GM12878 (cell line): ENCODE measurements at regions of chr14 and their contacts with region 1.

Region 1: DNA sequence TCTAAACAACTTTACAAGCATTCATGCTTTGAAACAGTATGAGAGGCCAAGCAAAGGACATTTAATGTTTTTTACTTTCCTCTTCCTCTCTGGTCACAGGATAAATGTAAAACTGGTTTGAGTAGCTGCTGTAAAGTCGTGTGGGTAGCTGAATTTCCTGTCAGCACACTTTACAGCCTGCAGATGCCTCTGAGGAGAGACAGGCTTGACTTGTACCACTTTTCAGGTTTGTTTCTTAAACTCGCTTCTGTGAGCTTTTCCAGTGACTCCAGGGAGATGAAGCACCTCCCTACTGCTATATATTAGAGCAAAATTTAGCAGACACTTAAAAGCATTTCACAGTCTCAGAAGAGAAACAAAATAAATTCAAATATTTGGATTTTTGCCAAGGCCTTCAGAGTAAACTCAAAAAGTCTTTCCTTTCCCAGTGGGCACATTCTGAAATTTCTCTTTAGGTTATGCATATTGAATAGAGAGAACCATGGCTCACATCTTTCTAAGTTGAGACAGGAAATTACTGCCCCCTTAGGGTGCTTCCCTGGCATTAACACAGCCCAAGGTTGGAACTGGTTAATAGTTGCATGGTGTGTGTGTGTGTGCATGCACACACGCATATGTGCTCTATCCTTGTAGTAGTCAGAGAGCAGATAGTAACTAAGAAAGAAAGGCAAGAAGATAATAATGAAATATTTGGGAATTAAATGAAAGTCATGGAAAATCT is 557.3 kb upstream of the MIS18BP1 start:
- DNase-seq: peak; percentile 21
- ATAC-seq: peak; percentile 76
- H3K4me3 ChIP-seq: no peak overlapping the region
- H3K27ac ChIP-seq: peak overlapping the region; percentile 12; the same call in 1 of the 2 replicates
- H3K4me1 ChIP-seq: no peaks in the 10 kb centered on the region
- H3K27me3 ChIP-seq: no peaks in the 10 kb centered on the region
- CTCF ChIP-seq: peak; percentile 16 to 20 (median 19); a peak in 3 of 6 replicates
- EP300 ChIP-seq: no peak
- POLR2A ChIP-seq: no peak
- RAD21 ChIP-seq: peak; percentile 36; the same call in 1 of the 2 replicates

Region 2: GRCh38 chr14:45587142-45587541 is 223.2 kb before region 1 on chr14:
- CTCF ChIA-PET with region 1: no interaction called
- POLR2A ChIA-PET with region 1: no interaction called
- RAD21 ChIA-PET with region 1: no interaction called
- SMC1A ChIA-PET with region 1: no interaction called
- in situ Hi-C with region 1: no loop called
- intact Hi-C with region 1: no loop called
- DNase-seq: no peak
- ATAC-seq: no peak
- H3K4me3 ChIP-seq: no peak overlapping the region
- H3K27ac ChIP-seq: no peak overlapping the region
- H3K4me1 ChIP-seq: no peaks in the 10 kb centered on the region
- H3K27me3 ChIP-seq: no peaks in the 10 kb centered on the region
- CTCF ChIP-seq: no peak
- EP300 ChIP-seq: no peak
- POLR2A ChIP-seq: no peak
- RAD21 ChIP-seq: no peak

Region 3: DNA sequence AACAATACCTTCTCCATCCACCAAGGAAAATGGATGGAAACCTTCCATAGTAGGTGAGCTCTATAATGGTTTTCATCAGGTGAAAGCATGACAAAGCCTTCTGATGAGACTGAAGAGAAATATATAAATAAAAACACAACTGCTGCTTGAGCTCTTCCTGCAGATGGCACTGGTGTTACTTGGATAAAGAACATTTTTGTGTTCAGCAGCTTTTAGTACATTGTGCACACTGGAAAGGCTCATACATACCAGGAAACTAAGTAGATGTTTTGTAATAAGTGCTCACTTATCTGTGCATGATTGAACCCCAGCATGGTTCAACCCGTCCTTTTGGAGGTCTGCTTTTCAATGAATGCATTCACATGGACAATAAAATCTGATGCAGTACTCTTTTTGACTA is 200.0 kb before region 1 on chr14:
- CTCF ChIA-PET with region 1: interaction called, 8 read pairs
- POLR2A ChIA-PET with region 1: no interaction called
- RAD21 ChIA-PET with region 1: interaction called, 15 read pairs
- SMC1A ChIA-PET with region 1: interaction called, 6 read pairs
- in situ Hi-C with region 1: no loop called
- intact Hi-C with region 1: no loop called
- DNase-seq: no peak
- ATAC-seq: no peak
- H3K4me3 ChIP-seq: no peak overlapping the region
- H3K27ac ChIP-seq: no peak overlapping the region
- H3K4me1 ChIP-seq: no peaks in the 10 kb centered on the region
- H3K27me3 ChIP-seq: no peaks in the 10 kb centered on the region
- CTCF ChIP-seq: peak in 1 of 3 experiments; percentile 7; a peak in 1 of 6 replicates
- EP300 ChIP-seq: no peak
- POLR2A ChIP-seq: no peak
- RAD21 ChIP-seq: peak; percentile 32; the same call in 1 of the 2 replicates

Region 4: DNA sequence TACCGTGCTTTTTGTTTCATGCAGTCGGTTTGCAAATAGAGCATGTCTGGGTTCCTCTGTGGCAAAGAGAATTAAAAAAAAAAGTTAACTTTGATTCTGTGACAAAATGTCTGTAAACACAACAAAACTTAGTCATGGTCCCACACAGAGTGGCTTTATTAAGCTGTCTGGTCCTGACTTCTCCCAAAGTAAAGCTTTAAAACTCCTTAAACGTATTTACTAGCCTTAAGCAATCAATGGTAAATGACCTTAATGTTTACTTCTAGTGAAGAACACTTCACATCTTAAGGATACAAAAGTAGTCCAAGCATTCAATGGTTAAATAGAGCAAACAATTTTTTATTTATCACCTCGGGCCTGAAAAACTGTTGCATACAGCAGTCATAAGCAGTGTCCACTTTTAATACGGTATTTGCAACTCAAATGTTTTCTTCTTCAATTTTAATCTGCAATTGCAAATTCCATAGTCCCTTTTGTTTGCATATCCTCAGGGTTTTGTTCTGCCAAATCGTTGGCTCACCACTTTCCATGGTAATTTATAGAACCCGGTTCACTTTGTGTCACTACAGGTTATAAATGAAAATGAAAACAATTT is 104.3 kb before region 1 on chr14:
- CTCF ChIA-PET with region 1: interaction called, 23 read pairs
- POLR2A ChIA-PET with region 1: interaction called, 3 read pairs
- RAD21 ChIA-PET with region 1: interaction called, 32 read pairs
- SMC1A ChIA-PET with region 1: interaction called, 37 read pairs
- in situ Hi-C with region 1: no loop called
- intact Hi-C with region 1: no loop called
- DNase-seq: no peak
- ATAC-seq: no peak
- H3K4me3 ChIP-seq: no peak overlapping the region
- H3K27ac ChIP-seq: no peak overlapping the region
- H3K4me1 ChIP-seq: no peaks in the 10 kb centered on the region
- H3K27me3 ChIP-seq: no peaks in the 10 kb centered on the region
- CTCF ChIP-seq: no peak
- EP300 ChIP-seq: no peak
- POLR2A ChIP-seq: no peak
- RAD21 ChIP-seq: no peak

Region 5: GRCh38 chr14:45728434-45729225 is 81.7 kb before region 1 on chr14:
- CTCF ChIA-PET with region 1: interaction called, 8 read pairs
- POLR2A ChIA-PET with region 1: interaction called, 3 read pairs
- RAD21 ChIA-PET with region 1: interaction called, 20 read pairs
- SMC1A ChIA-PET with region 1: interaction called, 14 read pairs
- in situ Hi-C with region 1: no loop called
- intact Hi-C with region 1: no loop called
- DNase-seq: no peak
- ATAC-seq: peak; percentile 66
- H3K4me3 ChIP-seq: no peak overlapping the region
- H3K27ac ChIP-seq: no peak overlapping the region
- H3K4me1 ChIP-seq: no peaks in the 10 kb centered on the region
- H3K27me3 ChIP-seq: no peaks in the 10 kb centered on the region
- CTCF ChIP-seq: no peak
- EP300 ChIP-seq: no peak
- POLR2A ChIP-seq: no peak
- RAD21 ChIP-seq: no peak

Region 6: DNA sequence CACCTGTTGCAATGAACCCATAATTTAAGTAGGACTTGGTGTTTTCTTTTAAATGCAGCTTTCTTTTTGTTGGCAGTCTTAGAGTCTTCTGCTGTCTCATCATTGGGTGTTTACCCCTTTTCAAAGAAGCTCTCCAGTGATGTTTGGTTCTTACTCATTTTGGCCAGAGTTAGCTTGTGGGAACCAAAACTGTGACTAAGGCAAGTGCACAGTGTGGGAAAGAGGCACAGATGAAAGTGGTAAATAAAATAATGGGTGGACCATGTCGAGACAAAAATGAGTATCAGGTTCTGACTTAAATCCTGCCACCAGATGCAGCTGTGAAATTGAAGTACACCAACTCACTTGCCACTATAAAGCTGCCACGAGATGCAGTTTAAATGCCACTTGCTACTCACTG is 58.1 kb after region 1 on chr14:
- CTCF ChIA-PET with region 1: interaction called, 8 read pairs
- POLR2A ChIA-PET with region 1: interaction called, 5 read pairs
- RAD21 ChIA-PET with region 1: interaction called, 23 read pairs
- SMC1A ChIA-PET with region 1: interaction called, 24 read pairs
- in situ Hi-C with region 1: no loop called
- intact Hi-C with region 1: no loop called
- DNase-seq: peak; percentile 94
- ATAC-seq: peak; percentile 80
- H3K4me3 ChIP-seq: peak overlapping the region; percentile 43; the same call in 1 of the 2 replicates
- H3K27ac ChIP-seq: peak overlapping the region; percentile 93
- H3K4me1 ChIP-seq: peaks cover 16% of the 10 kb centered on the region
- H3K27me3 ChIP-seq: no peaks in the 10 kb centered on the region
- CTCF ChIP-seq: no peak
- EP300 ChIP-seq: no peak
- POLR2A ChIP-seq: no peak
- RAD21 ChIP-seq: 0 out of 2 replicates have a peak, but pooled peaks have one; percentile 3